ENCODE measurements at regions of chr6 and their contacts with region 1.

Region 1: DNA sequence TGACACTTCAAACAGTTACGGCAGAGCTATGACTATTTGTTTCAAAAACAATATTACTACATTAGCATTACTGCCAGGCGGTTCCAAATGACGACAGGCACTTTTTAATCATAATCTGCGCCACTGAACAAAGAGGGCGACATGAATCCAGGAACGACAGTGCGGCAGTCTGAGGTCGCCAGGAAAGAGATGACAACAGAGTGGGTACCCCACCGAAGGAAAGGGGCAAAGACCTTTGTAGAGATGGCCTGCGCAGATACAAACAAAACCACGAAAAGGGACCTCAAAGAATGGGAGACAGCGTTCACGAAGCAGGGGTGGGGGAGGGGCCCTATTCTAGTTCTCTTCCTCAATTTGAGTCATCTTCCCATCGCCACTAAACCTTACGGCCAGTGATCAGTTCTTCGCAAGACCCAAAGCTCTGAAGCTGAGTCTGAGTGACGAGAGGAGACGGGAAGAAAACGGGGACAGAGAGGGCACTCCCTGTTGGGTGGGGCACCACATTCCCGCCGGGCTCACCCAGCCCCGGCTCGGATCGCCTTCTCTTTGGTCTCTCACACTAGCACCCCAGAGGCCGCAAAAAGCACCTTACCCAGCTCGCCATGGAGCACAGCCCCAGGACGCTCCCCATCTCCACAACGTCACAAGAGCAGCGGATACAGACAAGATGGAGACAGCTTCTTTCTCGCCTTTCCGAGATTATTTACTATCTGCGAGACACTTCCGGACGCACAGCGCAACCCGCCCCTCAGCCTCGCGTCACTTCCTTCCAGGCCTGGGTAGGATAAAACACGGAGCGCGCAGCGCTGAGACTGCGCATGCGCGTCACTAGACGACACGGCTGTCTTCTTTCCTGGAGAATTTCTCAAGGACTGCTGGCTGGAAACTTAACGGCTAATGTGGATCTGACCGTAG is at the start of gene SERINC1:
- DNase-seq: peak; percentile 86 to 98 (median 93)
- ATAC-seq: peak; percentile 93
- H3K4me3 ChIP-seq: peak within 1 kb of the TSS; percentile 92 to 94
- H3K4me3 Mint-ChIP-seq: peak within 1 kb of the TSS; percentile 99
- H3K27ac ChIP-seq: peak within 1 kb of the TSS; percentile 99
- H3K27ac Mint-ChIP-seq: peak within 1 kb of the TSS; percentile 100
- H3K4me1 ChIP-seq: peaks cover 35% of the 10 kb centered on the region
- H3K4me1 Mint-ChIP-seq: peaks cover 46% of the 10 kb centered on the region
- H3K27me3 ChIP-seq: no peaks in the 10 kb centered on the region
- H3K27me3 Mint-ChIP-seq: no peaks in the 10 kb centered on the region
- CTCF ChIP-seq: no peak
- total RNA-seq, gene SERINC1: 222 to 228 TPM

Region 2: DNA sequence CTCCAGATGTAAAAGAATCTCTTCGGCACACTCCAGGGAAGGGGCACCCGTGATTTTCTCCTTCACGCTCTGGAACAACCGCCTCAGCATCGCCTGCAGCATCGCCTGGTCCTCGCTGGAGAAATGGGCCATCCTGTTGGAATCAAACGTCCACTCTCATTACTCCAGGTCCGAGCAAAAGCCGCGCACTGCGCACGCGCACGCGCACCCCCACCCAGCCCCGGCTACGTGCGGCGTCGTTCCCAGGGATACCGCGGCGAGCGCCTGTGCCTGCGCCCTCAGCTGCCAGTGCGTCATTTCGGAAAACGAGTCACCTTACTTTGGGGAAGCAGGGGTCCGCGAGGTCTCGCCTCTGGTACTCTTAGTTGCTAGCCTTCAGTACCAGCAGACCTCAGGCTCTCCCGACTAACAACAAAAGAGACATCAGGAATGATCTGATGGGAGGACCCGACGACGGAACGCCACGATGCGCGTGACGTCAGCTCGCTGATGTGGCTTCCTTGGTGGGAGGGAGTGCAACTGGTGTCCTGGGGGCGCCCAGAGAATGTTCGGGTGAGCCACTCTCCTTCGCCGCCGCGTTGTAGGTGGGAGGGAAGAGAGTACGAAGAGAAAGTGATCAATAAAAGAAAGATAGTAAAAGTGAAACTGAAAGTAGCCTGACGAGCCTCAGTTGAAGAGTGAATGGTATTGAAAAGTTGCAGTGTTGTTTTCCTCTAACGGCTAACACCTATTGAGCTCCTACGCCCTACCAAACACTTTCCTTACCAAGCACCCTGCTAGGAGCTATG is 1136.9 kb before region 1 on chr6 and contains the start of gene TBC1D32:
- CTCF ChIA-PET with region 1: no interaction called
- POLR2A ChIA-PET with region 1: no interaction called
- intact Hi-C with region 1: loop called (anchors 1 to 10 kb)
- DNase-seq: peak; percentile 71 to 94 (median 86)
- ATAC-seq: peak; percentile 88
- H3K4me3 ChIP-seq: peak within 1 kb of the TSS; percentile 86 to 87
- H3K4me3 Mint-ChIP-seq: peak within 1 kb of the TSS; percentile 93
- H3K27ac ChIP-seq: peak within 1 kb of the TSS; percentile 99
- H3K27ac Mint-ChIP-seq: peak within 1 kb of the TSS; percentile 98
- H3K4me1 ChIP-seq: peaks cover 23% of the 10 kb centered on the region
- H3K4me1 Mint-ChIP-seq: peaks cover 35% of the 10 kb centered on the region
- H3K27me3 ChIP-seq: no peaks in the 10 kb centered on the region
- H3K27me3 Mint-ChIP-seq: no peaks in the 10 kb centered on the region
- CTCF ChIP-seq: no peak
- total RNA-seq, gene TBC1D32: 6.0 to 7.4 TPM

Region 3: GRCh38 chr6:122399384-122400158 is 71.8 kb before region 1 on chr6 and contains the start of gene HSF2:
- CTCF ChIA-PET with region 1: interaction called, 3 read pairs
- POLR2A ChIA-PET with region 1: interaction called, 10 read pairs
- intact Hi-C with region 1: loop called (anchors 1 kb)
- DNase-seq: peak; percentile 87 to 98 (median 92)
- ATAC-seq: peak; percentile 93
- H3K4me3 ChIP-seq: peak within 1 kb of the TSS; percentile 95 to 96
- H3K4me3 Mint-ChIP-seq: peak within 1 kb of the TSS; percentile 97
- H3K27ac ChIP-seq: peak within 1 kb of the TSS; percentile 84 to 86
- H3K27ac Mint-ChIP-seq: peak within 1 kb of the TSS; percentile 93
- H3K4me1 ChIP-seq: peaks cover 35% of the 10 kb centered on the region
- H3K4me1 Mint-ChIP-seq: peaks cover 41% of the 10 kb centered on the region
- H3K27me3 ChIP-seq: no peaks in the 10 kb centered on the region
- H3K27me3 Mint-ChIP-seq: no peaks in the 10 kb centered on the region
- CTCF ChIP-seq: no peak
- total RNA-seq, gene HSF2: 41.6 to 44.8 TPM

Region 4: DNA sequence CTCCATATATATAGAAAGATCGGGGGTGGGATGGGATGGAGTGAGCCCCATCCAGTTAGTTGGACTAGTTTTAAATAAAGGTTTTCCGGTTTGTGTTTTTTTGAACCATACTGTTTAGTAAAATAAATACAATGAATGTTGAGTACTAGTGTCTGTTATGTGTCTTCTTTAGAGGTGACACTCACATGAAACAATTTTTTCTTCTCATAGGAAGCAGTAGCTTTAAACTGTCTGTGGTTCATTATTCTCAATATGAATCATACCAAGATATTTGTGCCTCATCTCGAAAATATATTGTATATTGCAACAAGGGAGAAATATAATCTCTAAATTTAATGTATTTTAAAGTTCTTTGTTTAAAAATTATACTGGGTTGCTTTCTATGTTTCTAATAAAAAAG is 38.5 kb before region 1 on chr6:
- CTCF ChIA-PET with region 1: no interaction called
- POLR2A ChIA-PET with region 1: no interaction called
- intact Hi-C with region 1: loop called in 1 of 2 experiments (anchors 5 kb)
- DNase-seq: no peak
- ATAC-seq: no peak
- H3K4me3 ChIP-seq: no peak overlapping the region
- H3K4me3 Mint-ChIP-seq: no peak overlapping the region
- H3K27ac ChIP-seq: no peak overlapping the region
- H3K27ac Mint-ChIP-seq: no peak overlapping the region
- H3K4me1 ChIP-seq: no peaks in the 10 kb centered on the region
- H3K4me1 Mint-ChIP-seq: no peaks in the 10 kb centered on the region
- H3K27me3 ChIP-seq: no peaks in the 10 kb centered on the region
- H3K27me3 Mint-ChIP-seq: no peaks in the 10 kb centered on the region
- CTCF ChIP-seq: no peak

Region 5: DNA sequence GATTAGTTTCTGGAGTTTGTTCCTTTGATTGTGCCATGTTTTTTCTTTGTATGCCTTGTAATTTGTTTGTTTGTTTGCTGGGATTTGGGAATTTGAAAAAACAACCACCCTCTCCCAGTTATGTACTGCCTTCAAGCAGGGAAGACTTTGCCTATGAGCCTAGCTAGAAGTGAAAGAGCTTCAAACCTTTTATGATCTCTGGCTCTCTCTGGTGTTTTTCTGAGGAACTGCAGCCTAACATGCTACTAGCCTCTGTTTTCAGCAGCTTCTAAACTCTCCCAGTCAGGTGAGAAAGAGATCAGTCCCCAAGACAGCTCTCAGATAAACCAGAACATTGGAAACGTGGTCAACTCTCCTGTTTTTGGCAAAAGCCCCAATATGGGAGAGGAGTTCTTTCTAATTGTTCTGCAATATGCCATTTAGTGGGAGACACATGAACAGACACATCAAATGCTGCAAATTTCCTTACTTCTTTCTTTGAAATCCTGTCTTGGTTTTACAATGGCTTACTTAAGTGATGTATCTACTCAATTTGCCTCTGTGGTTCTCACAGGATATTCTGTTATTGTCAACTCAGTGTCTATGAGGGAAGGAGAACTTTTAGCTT is 59.2 kb after region 1 on chr6:
- CTCF ChIA-PET with region 1: interaction called, 23 read pairs
- POLR2A ChIA-PET with region 1: interaction called, 5 read pairs
- intact Hi-C with region 1: loop called (anchors 1 kb)
- DNase-seq: peak; percentile 18 to 77 (median 54)
- ATAC-seq: peak; percentile 99
- H3K4me3 ChIP-seq: no peak overlapping the region
- H3K4me3 Mint-ChIP-seq: no peak overlapping the region
- H3K27ac ChIP-seq: no peak overlapping the region
- H3K27ac Mint-ChIP-seq: no peak overlapping the region
- H3K4me1 ChIP-seq: no peaks in the 10 kb centered on the region
- H3K4me1 Mint-ChIP-seq: no peaks in the 10 kb centered on the region
- H3K27me3 ChIP-seq: no peaks in the 10 kb centered on the region
- H3K27me3 Mint-ChIP-seq: peaks cover 28% of the 10 kb centered on the region
- CTCF ChIP-seq: peak; percentile 85